ENCODE measurements at regions of chr11 and their contacts with region 1.

Region 1: GRCh38 chr11:3962406-3962840 is 107.0 kb downstream of the STIM1 start:
- DNase-seq: no peak
- CTCF ChIP-seq: no peak

Region 2: GRCh38 chr11:3854977-3855807 is 107.2 kb before region 1 on chr11 and contains the start of gene STIM1:
- in situ Hi-C with region 1: loop called (anchors 10 kb)
- DNase-seq: peak; percentile 93
- CTCF ChIP-seq: peak; percentile 95

Measured in GM13976 (cell line).